CD4-positive, alpha-beta T cell (primary cell): ENCODE measurements at regions of chr19 and their contacts with region 1.

Region 1: GRCh38 chr19:2636897-2637683 is 65.4 kb downstream of the GNG7 start:
- DNase-seq: peak; percentile 66 to 88 (median 73)
- ATAC-seq: peak; percentile 98
- H3K4me3 ChIP-seq: no peak overlapping the region
- H3K4me3 Mint-ChIP-seq: no peak overlapping the region
- H3K27ac ChIP-seq: no peak overlapping the region
- H3K27ac Mint-ChIP-seq: no peak overlapping the region
- H3K4me1 ChIP-seq: peaks cover 13% of the 10 kb centered on the region
- H3K4me1 Mint-ChIP-seq: peaks cover 13% of the 10 kb centered on the region
- H3K27me3 ChIP-seq: no peaks in the 10 kb centered on the region
- H3K27me3 Mint-ChIP-seq: no peaks in the 10 kb centered on the region
- CTCF ChIP-seq: peak; percentile 81

Region 2: DNA sequence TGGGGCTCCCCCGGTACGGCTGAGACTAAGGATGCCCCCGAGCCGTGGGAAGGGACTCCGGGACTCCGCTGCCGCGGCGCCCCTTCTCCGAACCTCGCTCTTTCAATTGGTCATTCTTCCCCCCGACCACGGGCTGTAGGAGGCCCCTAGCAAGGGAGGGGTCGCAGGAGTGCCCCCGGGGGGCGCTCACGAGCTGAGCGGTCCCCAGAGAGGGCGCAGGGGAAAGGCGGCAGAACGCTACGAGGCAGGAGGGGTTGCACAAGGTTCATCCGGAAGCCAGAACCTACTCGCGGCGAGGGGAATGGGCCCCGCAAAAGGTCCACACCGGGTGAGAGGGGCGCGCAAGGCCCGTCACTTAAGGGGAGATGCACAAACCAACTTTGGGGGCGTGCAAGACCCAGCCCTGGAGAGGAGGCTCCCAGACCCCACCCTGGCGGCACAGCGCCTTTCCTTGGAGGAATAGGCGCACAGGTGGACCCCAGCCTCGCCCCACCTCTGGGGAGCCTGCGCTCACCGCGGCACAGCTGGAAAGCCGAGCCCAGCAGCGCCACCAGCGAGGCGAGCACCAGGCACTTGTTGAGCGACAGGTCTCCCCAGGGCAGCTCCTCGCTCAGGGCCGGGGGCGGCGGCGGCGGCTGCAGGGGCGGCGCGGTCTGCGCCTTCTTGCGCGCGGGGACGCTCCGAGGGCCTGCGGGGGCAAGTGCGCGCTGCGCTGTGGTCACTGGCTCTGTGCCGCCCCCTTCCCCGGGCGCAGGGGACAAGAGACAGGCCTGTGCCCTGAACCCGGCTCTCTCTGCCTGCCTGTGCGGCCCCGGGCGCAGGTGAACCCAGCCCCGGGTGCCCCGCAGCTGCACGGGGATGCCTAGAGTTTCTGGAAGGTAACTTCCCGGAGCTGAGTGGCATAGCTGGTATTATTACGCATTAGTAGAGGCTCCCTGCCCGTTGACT is 383.7 kb before region 1 on chr19:
- CTCF ChIA-PET with region 1: no interaction called
- POLR2A ChIA-PET with region 1: no interaction called
- intact Hi-C with region 1: no loop called
- DNase-seq: peak in 10 of 14 experiments; percentile 55 to 76 (median 64)
- ATAC-seq: peak; percentile 47
- H3K4me3 ChIP-seq: peak overlapping the region; percentile 50
- H3K4me3 Mint-ChIP-seq: peak overlapping the region; percentile 80
- H3K27ac ChIP-seq: no peak overlapping the region
- H3K27ac Mint-ChIP-seq: peak overlapping the region; percentile 64
- H3K4me1 ChIP-seq: peaks cover 67% of the 10 kb centered on the region
- H3K4me1 Mint-ChIP-seq: peaks cover 17% of the 10 kb centered on the region
- H3K27me3 ChIP-seq: peaks cover 23 to 26% of the 10 kb centered on the region in 2 experiments
- H3K27me3 Mint-ChIP-seq: no peaks in the 10 kb centered on the region
- CTCF ChIP-seq: peak; percentile 70

Region 3: GRCh38 chr19:2507109-2507508 is 130.0 kb before region 1 on chr19:
- CTCF ChIA-PET with region 1: interaction called, 10 read pairs
- POLR2A ChIA-PET with region 1: no interaction called
- intact Hi-C with region 1: no loop called
- DNase-seq: peak in 11 of 14 experiments; percentile 12 to 74 (median 45)
- ATAC-seq: peak; percentile 59
- H3K4me3 ChIP-seq: no peak overlapping the region
- H3K4me3 Mint-ChIP-seq: no peak overlapping the region
- H3K27ac ChIP-seq: no peak overlapping the region
- H3K27ac Mint-ChIP-seq: peak overlapping the region; percentile 80
- H3K4me1 ChIP-seq: peaks cover 32% of the 10 kb centered on the region
- H3K4me1 Mint-ChIP-seq: peaks cover 21% of the 10 kb centered on the region
- H3K27me3 ChIP-seq: no peaks in the 10 kb centered on the region
- H3K27me3 Mint-ChIP-seq: no peaks in the 10 kb centered on the region
- CTCF ChIP-seq: no peak

Region 4: DNA sequence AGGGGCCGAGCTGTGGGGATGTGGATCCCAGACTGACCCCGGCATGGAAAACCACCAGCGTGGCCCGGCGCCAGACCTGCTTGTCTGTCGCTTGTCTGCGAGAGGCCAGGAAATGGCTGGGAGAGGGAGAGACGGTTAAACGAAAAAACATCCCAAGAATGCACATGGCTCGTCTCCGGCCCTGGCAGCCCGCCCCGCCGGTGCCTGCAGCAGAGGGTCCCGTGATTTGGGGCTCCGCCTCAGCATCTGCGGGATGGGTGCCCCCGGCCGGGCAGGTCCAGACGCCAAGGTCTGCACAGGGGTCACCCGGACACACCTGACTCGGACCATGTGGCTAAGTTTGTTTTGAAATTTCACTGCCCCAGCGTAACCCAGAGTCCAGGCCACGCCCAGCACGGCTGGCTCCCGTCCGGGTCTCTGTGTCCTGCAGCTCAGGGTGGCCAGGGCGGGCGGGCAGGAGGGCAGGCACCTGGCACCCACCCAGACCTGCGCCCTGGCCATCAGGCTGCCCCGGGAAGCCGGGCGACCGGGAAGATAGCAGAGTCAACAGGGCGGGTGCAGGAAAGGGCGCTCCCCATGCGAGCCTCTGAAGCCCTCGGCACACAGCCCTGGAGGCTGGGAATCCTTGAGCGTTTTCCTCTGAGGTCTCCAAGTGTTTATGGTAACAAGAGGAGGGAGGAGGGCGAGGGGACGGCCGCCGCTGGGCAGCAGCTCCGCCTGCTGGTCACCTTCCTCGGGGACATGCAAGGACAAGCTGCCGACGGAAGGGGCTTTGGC is 58.0 kb before region 1 on chr19:
- CTCF ChIA-PET with region 1: interaction called, 6 read pairs
- POLR2A ChIA-PET with region 1: no interaction called
- intact Hi-C with region 1: loop called in 1 of 2 experiments (anchors 2 kb)
- DNase-seq: peak; percentile 29 to 80 (median 64)
- ATAC-seq: peak; percentile 46
- H3K4me3 ChIP-seq: peak overlapping the region; percentile 30
- H3K4me3 Mint-ChIP-seq: no peak overlapping the region
- H3K27ac ChIP-seq: no peak overlapping the region
- H3K27ac Mint-ChIP-seq: no peak overlapping the region
- H3K4me1 ChIP-seq: peaks cover 12% of the 10 kb centered on the region
- H3K4me1 Mint-ChIP-seq: no peaks in the 10 kb centered on the region
- H3K27me3 ChIP-seq: peaks cover 2 to 5% of the 10 kb centered on the region in 2 experiments
- H3K27me3 Mint-ChIP-seq: peaks cover 5% of the 10 kb centered on the region
- CTCF ChIP-seq: peak; percentile 70

Region 5: DNA sequence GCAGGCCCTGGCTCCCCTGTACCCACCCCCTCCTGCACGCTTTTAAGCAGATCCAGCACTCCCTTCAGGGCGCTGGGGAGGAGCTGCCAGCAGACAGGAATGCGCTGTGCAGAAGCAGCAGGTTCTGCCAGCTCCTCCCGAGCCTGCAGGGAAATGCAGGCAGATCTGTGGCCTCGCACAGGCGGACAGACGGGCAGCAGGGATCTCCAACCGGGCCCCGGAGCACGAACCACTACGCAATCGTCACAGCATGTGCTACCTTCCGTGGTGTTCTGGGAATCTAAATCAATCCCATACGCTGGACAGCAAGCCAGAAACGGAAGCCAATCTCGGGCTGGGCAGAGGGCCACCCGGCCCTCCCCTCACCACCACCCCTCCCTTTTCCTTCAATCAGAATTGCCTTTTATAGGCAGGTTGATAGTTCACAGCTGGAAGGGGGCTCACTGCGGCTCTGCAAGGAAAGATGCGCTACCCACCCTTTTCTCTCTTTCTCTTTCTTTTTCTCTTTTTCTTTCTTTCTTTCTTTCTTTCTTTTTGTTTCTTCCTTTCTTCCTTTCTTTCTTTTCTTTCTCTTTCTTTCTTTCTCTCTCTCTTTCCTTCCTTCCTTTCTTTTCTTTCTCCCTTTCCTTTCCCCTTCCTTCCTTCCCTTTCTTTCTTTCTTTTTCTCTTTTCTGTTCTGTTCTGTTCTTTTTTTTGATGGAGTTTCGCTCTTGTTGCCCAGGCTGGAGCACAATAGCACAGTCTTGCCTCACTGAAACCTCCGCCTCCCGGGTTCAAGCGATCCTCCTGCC is 34.5 kb before region 1 on chr19:
- CTCF ChIA-PET with region 1: interaction called, 37 read pairs
- POLR2A ChIA-PET with region 1: no interaction called
- intact Hi-C with region 1: no loop called
- DNase-seq: no peak
- ATAC-seq: no peak
- H3K4me3 ChIP-seq: no peak overlapping the region
- H3K4me3 Mint-ChIP-seq: no peak overlapping the region
- H3K27ac ChIP-seq: no peak overlapping the region
- H3K27ac Mint-ChIP-seq: no peak overlapping the region
- H3K4me1 ChIP-seq: peaks cover 19% of the 10 kb centered on the region
- H3K4me1 Mint-ChIP-seq: peaks cover 13% of the 10 kb centered on the region
- H3K27me3 ChIP-seq: no peaks in the 10 kb centered on the region
- H3K27me3 Mint-ChIP-seq: peaks cover under 1% of the 10 kb centered on the region
- CTCF ChIP-seq: no peak

Region 6: GRCh38 chr19:2618611-2619010 is 18.5 kb before region 1 on chr19:
- CTCF ChIA-PET with region 1: interaction called, 59 read pairs
- POLR2A ChIA-PET with region 1: interaction called, 19 read pairs
- intact Hi-C with region 1: loop called in 1 of 2 experiments (anchors 2 kb)
- DNase-seq: peak; percentile 40 to 84 (median 64)
- ATAC-seq: peak; percentile 27
- H3K4me3 ChIP-seq: peak overlapping the region; percentile 26
- H3K4me3 Mint-ChIP-seq: peak overlapping the region; percentile 87
- H3K27ac ChIP-seq: peak overlapping the region; percentile 39 to 61
- H3K27ac Mint-ChIP-seq: peak overlapping the region; percentile 92
- H3K4me1 ChIP-seq: peaks cover 77% of the 10 kb centered on the region
- H3K4me1 Mint-ChIP-seq: peaks cover 65% of the 10 kb centered on the region
- H3K27me3 ChIP-seq: no peaks in the 10 kb centered on the region
- H3K27me3 Mint-ChIP-seq: no peaks in the 10 kb centered on the region
- CTCF ChIP-seq: no peak

Region 7: DNA sequence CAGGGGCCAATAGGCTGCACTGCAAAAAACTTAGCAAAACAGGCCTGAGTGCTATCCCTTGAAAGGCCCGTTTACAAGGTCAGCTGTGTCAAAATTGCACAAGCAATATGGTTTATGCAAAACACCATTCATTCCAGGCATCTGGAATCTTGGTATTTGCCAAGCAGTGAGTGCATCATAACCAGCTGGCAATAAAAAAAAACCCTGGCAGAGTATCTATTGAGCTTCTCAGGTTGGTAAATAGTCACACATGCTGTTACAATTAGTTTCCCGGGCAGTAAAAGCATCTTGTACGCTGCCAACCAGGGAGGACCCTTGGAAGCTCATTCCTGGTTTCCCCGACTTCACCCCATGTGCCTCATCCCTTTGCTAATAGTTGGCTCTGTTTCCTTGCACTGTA is 286.4 kb after region 1 on chr19:
- CTCF ChIA-PET with region 1: no interaction called
- POLR2A ChIA-PET with region 1: no interaction called
- intact Hi-C with region 1: no loop called
- DNase-seq: no peak
- ATAC-seq: no peak
- H3K4me3 ChIP-seq: no peak overlapping the region
- H3K4me3 Mint-ChIP-seq: no peak overlapping the region
- H3K27ac ChIP-seq: no peak overlapping the region
- H3K27ac Mint-ChIP-seq: no peak overlapping the region
- H3K4me1 ChIP-seq: no peaks in the 10 kb centered on the region
- H3K4me1 Mint-ChIP-seq: no peaks in the 10 kb centered on the region
- H3K27me3 ChIP-seq: no peaks in the 10 kb centered on the region
- H3K27me3 Mint-ChIP-seq: no peaks in the 10 kb centered on the region
- CTCF ChIP-seq: no peak